BJ (cell line): ENCODE measurements at regions of chr4 and their contacts with region 1.

Region 1: DNA sequence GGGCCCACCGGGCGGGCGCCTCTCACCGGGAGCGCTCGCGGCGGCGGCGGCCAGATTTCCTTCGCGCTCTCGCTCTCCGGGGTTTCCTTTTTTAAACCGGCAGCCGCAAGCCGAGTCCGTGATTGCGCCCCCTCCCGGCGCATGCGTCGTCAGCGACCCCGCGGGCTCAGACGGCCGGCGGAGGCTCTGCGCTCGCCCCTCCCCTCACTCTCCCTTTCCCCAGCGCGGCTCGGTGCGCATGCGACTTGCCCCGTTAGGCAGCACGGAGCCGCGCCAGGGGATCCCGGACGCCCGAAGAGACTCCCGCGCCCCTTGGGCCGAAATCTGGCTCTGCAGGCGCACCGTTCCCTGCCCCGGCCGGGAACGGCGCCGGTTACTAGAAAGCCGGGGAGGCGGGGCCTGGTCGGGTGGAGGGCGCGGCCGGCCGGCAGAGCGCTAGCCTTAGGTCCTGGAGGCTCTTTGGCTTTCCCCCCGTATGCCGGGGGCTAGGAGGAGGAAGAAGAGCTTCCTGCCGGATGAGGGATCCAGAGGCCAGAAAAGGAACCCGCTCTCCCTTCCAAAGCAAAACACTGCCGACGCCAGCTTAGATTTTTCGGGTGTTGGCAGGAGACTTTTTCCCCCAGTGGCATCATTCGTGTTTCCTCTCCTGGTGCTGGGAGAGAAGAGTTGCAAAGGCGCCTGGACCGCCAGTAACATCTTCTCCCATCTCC is at the start of gene CLOCK:
- DNase-seq: no peak
- H3K4me3 ChIP-seq: peak within 1 kb of the TSS; percentile 56
- H3K27me3 ChIP-seq: no peaks in the 10 kb centered on the region
- CTCF ChIP-seq: peak; percentile 48
- polyA plus RNA-seq, gene CLOCK: 14.5 and 21.2 TPM in 2 replicates

Region 2: DNA sequence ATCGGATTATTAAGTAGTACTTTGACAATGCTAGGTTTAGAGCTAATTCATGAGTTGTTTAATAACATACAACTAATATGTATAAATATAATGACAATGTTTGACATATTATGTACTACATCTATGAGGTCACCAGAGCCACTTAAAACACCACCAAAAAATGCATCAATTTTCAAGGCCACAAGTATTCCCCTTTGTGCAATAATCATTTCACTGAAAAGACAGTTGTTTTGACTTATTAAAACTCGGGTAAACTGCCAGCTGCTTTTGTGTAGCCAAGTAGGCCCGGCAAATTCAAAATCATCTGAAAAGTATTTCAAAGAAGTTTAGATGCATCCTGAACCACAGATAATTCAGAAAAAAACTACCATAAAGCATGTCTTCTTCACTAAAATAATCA is 48.9 kb before region 1 on chr4:
- CTCF ChIA-PET with region 1: interaction called, 3 read pairs
- POLR2A ChIA-PET with region 1: interaction called, 12 read pairs
- DNase-seq: no peak
- H3K4me3 ChIP-seq: no peak overlapping the region
- H3K27me3 ChIP-seq: no peaks in the 10 kb centered on the region
- CTCF ChIP-seq: no peak

Region 3: DNA sequence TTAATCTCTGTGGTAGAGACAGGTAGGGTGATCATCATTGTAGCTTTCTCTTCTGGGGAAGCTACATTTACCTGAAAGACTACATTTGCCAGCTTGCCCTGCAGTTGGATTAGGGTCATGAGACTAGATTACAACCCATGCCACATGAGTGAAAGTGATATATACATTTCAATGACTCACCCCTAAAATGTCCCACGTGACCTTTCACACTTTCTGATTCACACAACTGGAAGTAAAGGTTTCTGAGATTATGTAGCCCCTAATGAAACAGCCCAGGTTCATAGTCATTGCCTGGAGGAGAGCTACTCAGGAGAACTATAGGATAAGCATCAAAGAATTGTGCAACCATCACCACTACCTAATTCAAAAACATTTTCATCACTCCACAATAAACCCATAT is 27.3 kb after region 1 on chr4:
- CTCF ChIA-PET with region 1: no interaction called
- POLR2A ChIA-PET with region 1: no interaction called
- DNase-seq: no peak
- H3K4me3 ChIP-seq: no peak overlapping the region
- H3K27me3 ChIP-seq: no peaks in the 10 kb centered on the region
- CTCF ChIP-seq: no peak

Region 4: DNA sequence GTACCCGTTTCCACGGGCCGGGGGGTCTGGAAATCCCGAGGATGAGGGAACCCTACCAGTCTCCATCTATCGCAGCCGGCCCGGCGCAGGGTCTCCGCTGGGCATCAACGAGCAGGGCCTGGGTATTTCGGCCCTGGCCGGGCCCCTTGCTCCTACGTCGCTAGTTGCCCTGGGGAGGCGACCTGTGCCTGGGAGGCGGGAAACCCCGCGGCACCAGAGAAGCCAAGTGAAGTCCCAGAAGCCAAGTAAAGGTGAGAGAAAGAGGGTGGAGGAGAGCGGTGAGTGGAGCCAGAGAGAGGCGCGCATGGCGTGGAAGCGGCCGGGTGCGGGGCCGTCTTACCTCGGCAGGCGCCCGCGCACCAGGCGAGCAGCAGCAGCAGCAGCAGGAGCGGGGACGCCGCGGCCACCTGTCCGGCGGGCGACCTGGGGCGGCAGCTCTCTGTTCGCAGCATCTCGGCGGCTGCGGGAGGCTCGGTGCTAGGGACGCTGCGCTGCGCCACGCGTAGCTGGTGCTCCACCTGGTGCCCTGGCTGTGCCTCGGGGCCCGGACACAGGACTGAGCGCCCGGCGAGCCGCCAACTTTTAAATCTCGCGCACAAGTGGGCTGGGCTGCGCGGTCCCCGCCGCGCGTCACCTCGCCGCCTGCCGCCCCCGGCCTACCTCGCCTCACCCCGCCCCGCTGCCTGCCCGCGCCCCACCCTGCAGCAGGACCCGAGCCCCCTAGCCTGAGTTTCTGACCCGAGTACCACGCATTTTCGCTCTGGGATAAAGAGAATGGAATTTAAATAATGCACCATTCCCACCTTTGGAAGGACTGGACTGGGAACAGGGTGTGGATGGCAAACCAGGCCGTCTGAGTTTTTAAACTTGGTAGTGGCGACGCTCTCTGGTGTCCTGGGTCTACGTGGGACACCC is 89.1 kb after region 1 on chr4 and contains the start of gene NMU:
- CTCF ChIA-PET with region 1: no interaction called
- POLR2A ChIA-PET with region 1: no interaction called
- DNase-seq: no peak
- H3K4me3 ChIP-seq: peak within 1 kb of the TSS; percentile 16
- H3K27me3 ChIP-seq: peaks cover 17% of the 10 kb centered on the region
- CTCF ChIP-seq: no peak
- polyA plus RNA-seq, gene NMU: not detected in 2 replicates